ENCODE measurements at regions of chr12 and their contacts with region 1.

Region 1: DNA sequence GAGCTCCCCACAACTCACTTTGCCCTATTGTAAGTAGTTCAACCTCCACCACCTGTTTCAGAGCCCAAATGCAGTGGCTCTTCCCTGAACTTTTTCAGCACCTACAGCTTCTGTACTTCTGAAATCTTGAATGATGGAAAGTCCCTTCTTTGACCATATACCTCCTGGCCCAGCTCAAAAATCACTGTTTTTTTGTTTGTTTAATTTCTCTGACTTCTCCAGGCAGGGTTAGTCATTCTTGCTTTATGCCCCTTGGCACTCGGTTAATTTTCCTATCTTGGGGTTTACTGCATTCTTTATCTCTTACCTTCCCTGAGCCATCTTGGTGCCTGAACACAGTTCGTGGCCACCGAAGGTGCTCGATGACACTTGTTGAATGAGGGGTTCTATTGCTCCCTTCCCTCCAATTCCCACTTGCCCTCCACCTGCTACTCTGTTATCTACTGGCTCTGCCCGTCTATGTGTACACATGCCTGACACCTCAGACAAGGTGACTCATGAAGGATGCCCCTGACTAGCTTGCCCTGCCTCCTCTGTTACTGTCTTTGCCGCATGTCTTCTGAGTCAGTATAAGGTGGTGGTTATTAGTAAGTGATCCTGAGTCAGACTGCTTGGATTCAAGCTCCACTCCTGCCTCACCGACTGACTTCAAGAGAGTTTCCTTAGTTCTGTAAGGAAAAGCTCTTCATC is 4.4 kb downstream of the AMHR2 start:
- DNase-seq: peak; percentile 95
- H3K4me3 Mint-ChIP-seq: no peak overlapping the region
- H3K27ac Mint-ChIP-seq: peak overlapping the region; percentile 0
- H3K4me1 Mint-ChIP-seq: peaks cover 21% of the 10 kb centered on the region
- H3K27me3 Mint-ChIP-seq: no peaks in the 10 kb centered on the region
- CTCF ChIP-seq: no peak

Region 2: GRCh38 chr12:53441040-53441833 is 13.2 kb after region 1 on chr12 and contains the start of gene PRR13:
- CTCF ChIA-PET with region 1: interaction called, 4 read pairs
- POLR2A ChIA-PET with region 1: interaction called, 37 read pairs
- intact Hi-C with region 1: no loop called
- DNase-seq: peak; percentile 99
- H3K4me3 Mint-ChIP-seq: peak within 1 kb of the TSS; percentile 95
- H3K27ac Mint-ChIP-seq: peak within 1 kb of the TSS; percentile 94
- H3K4me1 Mint-ChIP-seq: peaks cover 18% of the 10 kb centered on the region
- H3K27me3 Mint-ChIP-seq: no peaks in the 10 kb centered on the region
- CTCF ChIP-seq: no peak
- total RNA-seq, gene PRR13: 147 and 173 TPM in 2 replicates

Region 3: DNA sequence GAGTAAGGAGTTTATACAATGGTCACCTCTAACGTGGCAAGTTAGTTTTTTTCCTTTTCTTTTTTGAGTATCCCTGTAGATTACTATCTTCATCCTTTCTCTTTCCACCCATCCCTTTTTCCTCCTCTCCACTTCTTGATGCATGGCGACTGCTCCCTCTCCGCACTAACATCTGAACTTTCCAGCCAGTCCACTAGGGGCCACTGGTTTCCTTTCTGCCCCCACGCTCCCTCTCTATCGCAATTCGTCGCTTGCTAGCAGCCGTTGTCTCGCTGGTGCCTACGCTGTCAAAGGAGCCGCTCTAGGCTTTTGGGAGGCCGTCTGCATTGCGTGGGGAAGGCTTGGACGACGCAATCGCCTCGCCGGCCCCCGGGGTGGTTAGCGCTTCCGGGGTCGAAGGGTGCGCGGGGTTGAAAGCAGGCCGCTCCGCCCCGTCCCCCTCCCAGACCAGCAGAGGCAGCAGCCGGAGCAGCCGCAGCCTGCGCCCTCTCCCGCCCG is 23.7 kb after region 1 on chr12 and contains the start of gene PCBP2:
- CTCF ChIA-PET with region 1: interaction called, 3 read pairs
- POLR2A ChIA-PET with region 1: interaction called, 10 read pairs
- intact Hi-C with region 1: no loop called
- DNase-seq: peak; percentile 99
- H3K4me3 Mint-ChIP-seq: peak within 1 kb of the TSS; percentile 92
- H3K27ac Mint-ChIP-seq: peak within 1 kb of the TSS; percentile 100
- H3K4me1 Mint-ChIP-seq: peaks cover 30% of the 10 kb centered on the region
- H3K27me3 Mint-ChIP-seq: no peaks in the 10 kb centered on the region
- CTCF ChIP-seq: peak; percentile 56
- total RNA-seq, gene PCBP2: 994 and 1,037 TPM in 2 replicates